Mammary epithelial cell (primary cell): ENCODE measurements at regions of chrX and their contacts with region 1.

Region 1: GRCh38 chrX:17788439-17788838 is 51.1 kb downstream of the SCML1 start:
- DNase-seq: peak; percentile 8
- H3K4me3 ChIP-seq: no peak overlapping the region
- H3K27ac ChIP-seq: no peak overlapping the region
- H3K4me1 ChIP-seq: peaks cover 3% of the 10 kb centered on the region
- H3K27me3 ChIP-seq: no peaks in the 10 kb centered on the region
- CTCF ChIP-seq: peak; percentile 73 to 88

Region 2: DNA sequence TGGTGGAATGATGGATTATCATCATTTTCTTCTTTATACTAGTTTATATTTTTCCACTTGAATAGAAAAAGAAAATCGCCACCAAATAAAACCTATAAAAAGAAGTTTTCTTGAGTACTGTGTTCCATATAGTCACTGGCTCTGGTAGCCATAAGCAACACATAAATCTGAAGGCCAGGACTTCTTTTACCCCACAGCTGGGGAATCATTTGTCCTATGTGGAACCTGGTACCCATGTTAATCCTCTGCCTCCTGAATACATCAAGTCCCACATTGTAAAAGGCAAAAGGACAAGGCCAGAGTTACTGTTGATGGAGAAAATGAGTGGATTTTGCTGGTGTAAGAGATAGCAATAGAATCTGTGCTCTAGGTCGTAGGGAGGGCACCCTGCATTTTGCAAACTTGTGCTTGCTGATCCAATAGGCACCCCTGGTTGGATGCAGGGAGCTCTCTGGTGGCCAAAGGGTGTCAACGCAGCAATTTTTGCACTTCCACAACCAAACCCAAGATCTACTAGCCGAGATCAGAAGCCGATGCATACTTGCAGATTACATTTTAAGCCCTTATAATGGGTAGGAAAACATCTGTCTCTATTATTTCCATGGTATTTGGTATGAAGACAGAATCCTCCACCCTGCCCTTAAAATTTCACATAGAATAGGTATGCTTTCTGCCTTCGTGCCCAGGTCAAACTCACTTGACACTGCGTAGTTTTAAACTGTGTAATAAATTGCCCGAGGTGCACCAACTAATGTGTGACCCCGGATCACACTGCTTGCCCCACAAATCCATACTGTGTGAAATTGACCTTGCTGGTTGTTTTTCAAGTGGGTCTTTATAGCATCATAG is 197.3 kb before region 1 on chrX:
- CTCF ChIA-PET with region 1: no interaction called
- dilution Hi-C with region 1: no loop called
- in situ Hi-C with region 1: no loop called
- intact Hi-C with region 1: no loop called
- DNase-seq: peak; percentile 64
- H3K4me3 ChIP-seq: peak overlapping the region in 2 of 3 experiments; percentile 19 to 28
- H3K27ac ChIP-seq: peak overlapping the region; percentile 18
- H3K4me1 ChIP-seq: peaks cover 33% of the 10 kb centered on the region
- H3K27me3 ChIP-seq: no peaks in the 10 kb centered on the region
- CTCF ChIP-seq: peak; percentile 88 to 94

Region 3: GRCh38 chrX:17642891-17643290 is 145.5 kb before region 1 on chrX:
- CTCF ChIA-PET with region 1: no interaction called
- dilution Hi-C with region 1: no loop called
- in situ Hi-C with region 1: no loop called
- intact Hi-C with region 1: no loop called
- DNase-seq: no peak
- H3K4me3 ChIP-seq: no peak overlapping the region
- H3K27ac ChIP-seq: no peak overlapping the region
- H3K4me1 ChIP-seq: no peaks in the 10 kb centered on the region
- H3K27me3 ChIP-seq: no peaks in the 10 kb centered on the region
- CTCF ChIP-seq: no peak

Region 4: GRCh38 chrX:18377796-18378195 is 589.4 kb after region 1 on chrX:
- CTCF ChIA-PET with region 1: no interaction called
- dilution Hi-C with region 1: no loop called
- in situ Hi-C with region 1: no loop called
- intact Hi-C with region 1: loop called (anchors 5 kb)
- DNase-seq: no peak
- H3K4me3 ChIP-seq: no peak overlapping the region
- H3K27ac ChIP-seq: no peak overlapping the region
- H3K4me1 ChIP-seq: no peaks in the 10 kb centered on the region
- H3K27me3 ChIP-seq: peaks cover 2% of the 10 kb centered on the region
- CTCF ChIP-seq: peak; percentile 23 to 44

Region 5: DNA sequence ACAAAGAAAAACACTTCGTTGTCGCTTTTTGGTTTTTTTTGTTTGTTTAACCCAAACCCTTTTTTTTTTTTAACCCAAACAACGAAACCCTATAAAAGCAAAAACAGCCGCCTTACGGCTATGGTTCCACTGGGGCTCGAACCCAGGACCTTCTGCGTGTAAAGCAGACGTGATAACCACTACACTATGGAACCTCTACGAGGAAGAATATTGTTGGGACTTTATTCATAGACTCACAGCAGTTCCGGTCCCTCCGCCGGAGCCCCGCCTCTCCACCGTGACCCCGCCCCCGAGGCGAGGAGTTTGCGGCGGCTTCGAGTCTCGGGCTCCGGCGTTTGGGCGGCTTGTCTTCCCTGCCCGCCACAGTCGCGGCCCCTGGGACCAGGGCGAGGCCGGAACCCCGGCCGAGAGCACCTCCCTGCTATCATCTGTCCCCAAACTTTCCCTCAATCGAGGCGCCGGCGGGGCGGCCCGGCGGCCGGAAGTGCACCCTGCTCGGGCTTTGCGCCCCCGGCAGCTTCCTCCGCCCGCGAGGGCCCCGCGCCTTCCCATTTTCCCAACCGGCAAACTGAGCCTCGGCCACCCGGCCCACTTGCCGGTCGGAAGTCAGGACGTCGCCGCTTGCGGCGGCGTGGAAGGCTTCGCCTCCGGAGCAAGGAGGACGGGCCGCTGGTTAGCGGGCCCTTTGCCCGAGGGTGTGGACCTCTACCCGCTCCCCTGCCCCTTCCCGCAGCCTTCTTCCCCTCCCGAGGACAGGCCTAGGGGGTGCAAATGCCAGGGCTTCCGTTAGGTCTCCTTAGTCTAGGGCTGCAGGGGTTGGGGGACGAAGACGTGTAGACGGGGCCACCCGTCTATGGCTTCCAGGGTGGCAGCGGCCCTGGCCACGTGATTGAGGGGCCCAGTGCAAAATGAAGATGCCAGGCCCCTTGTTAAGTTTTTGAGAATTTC is 886.6 kb after region 1 on chrX:
- CTCF ChIA-PET with region 1: no interaction called
- dilution Hi-C with region 1: no loop called
- in situ Hi-C with region 1: no loop called
- intact Hi-C with region 1: no loop called
- DNase-seq: peak; percentile 53
- H3K4me3 ChIP-seq: peak overlapping the region; percentile 57 to 66 (median 60)
- H3K27ac ChIP-seq: peak overlapping the region; percentile 20
- H3K4me1 ChIP-seq: no peaks in the 10 kb centered on the region
- H3K27me3 ChIP-seq: no peaks in the 10 kb centered on the region
- CTCF ChIP-seq: no peak